GM12878 (cell line): ENCODE measurements at regions of chr6 and their contacts with region 1.

Region 1: GRCh38 chr6:25017932-25018567 is 82.3 kb upstream of the RIPOR2 start:
- DNase-seq: no peak
- ATAC-seq: peak; percentile 89
- H3K4me3 ChIP-seq: no peak overlapping the region
- H3K27ac ChIP-seq: no peak overlapping the region
- H3K4me1 ChIP-seq: peaks cover 5% of the 10 kb centered on the region
- H3K27me3 ChIP-seq: no peaks in the 10 kb centered on the region
- CTCF ChIP-seq: peak; percentile 76 to 90 (median 82)
- EP300 ChIP-seq: no peak
- POLR2A ChIP-seq: no peak
- RAD21 ChIP-seq: peak; percentile 99

Region 2: GRCh38 chr6:24848461-24848860 is 169.6 kb before region 1 on chr6:
- CTCF ChIA-PET with region 1: interaction called, 314 read pairs
- POLR2A ChIA-PET with region 1: no interaction called
- RAD21 ChIA-PET with region 1: interaction called, 3 read pairs
- SMC1A ChIA-PET with region 1: interaction called, 16 read pairs
- in situ Hi-C with region 1: no loop called
- intact Hi-C with region 1: no loop called
- DNase-seq: no peak
- ATAC-seq: no peak
- H3K4me3 ChIP-seq: no peak overlapping the region
- H3K27ac ChIP-seq: no peak overlapping the region
- H3K4me1 ChIP-seq: no peaks in the 10 kb centered on the region
- H3K27me3 ChIP-seq: no peaks in the 10 kb centered on the region
- CTCF ChIP-seq: no peak
- EP300 ChIP-seq: no peak
- POLR2A ChIP-seq: no peak
- RAD21 ChIP-seq: no peak

Region 3: GRCh38 chr6:24883618-24884017 is 134.4 kb before region 1 on chr6:
- CTCF ChIA-PET with region 1: interaction called, 12 read pairs
- POLR2A ChIA-PET with region 1: interaction called, 3 read pairs
- RAD21 ChIA-PET with region 1: interaction called, 8 read pairs
- SMC1A ChIA-PET with region 1: interaction called, 10 read pairs
- in situ Hi-C with region 1: no loop called
- intact Hi-C with region 1: no loop called
- DNase-seq: peak; percentile 84
- ATAC-seq: peak; percentile 90
- H3K4me3 ChIP-seq: no peak overlapping the region
- H3K27ac ChIP-seq: peak overlapping the region; percentile 60; the same call in 1 of the 2 replicates
- H3K4me1 ChIP-seq: peaks cover 33% of the 10 kb centered on the region
- H3K27me3 ChIP-seq: no peaks in the 10 kb centered on the region
- CTCF ChIP-seq: no peak
- EP300 ChIP-seq: peak; percentile 54 to 74; a peak in 3 of 4 replicates
- POLR2A ChIP-seq: no peak
- RAD21 ChIP-seq: no peak

Region 4: DNA sequence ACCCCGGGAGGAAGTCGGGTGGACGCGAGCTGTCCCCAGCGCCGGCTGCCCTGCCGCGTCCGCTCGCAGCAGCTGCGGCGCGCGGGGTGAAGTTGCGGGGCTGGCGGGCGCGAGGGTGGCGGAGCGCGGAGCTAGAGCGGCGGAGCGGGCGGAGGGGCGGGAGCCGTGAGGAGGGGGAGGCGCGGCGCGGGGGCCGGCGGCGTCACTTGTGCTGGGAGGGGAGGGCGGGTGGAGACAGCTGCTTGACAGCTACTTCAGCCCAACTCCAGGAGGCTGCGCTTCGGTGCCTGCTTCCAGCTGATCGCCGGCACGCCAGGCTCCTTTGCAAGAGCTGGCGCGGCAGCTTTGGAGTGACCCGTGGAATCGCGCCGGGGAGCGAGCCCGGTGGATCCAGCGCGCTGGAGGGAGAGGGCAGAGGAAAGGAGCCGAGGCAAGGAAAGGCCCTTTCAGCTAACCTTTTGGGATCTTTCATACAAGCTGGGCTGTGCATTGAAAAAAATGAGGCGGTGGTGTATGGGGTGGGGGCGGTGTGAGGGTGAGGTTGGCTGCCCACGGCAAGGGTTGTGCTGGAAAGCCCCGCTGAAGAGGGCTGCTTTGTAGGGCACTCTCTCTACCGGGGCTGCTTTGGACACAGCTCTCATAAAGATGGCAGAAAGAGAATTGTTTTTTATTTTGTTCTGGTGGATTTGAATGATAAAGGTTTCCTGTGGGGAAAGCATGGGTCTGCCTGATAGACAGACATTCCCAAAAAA is 106.9 kb before region 1 on chr6:
- CTCF ChIA-PET with region 1: interaction called, 39 read pairs
- POLR2A ChIA-PET with region 1: no interaction called
- RAD21 ChIA-PET with region 1: interaction called, 23 read pairs
- SMC1A ChIA-PET with region 1: interaction called, 21 read pairs
- in situ Hi-C with region 1: no loop called
- intact Hi-C with region 1: no loop called
- DNase-seq: no peak
- ATAC-seq: peak; percentile 47
- H3K4me3 ChIP-seq: peak overlapping the region; percentile 86
- H3K27ac ChIP-seq: peak overlapping the region; percentile 60
- H3K4me1 ChIP-seq: peaks cover 26% of the 10 kb centered on the region
- H3K27me3 ChIP-seq: no peaks in the 10 kb centered on the region
- CTCF ChIP-seq: no peak
- EP300 ChIP-seq: no peak
- POLR2A ChIP-seq: no peak; the same call in 1 of the 2 replicates
- RAD21 ChIP-seq: no peak

Region 5: DNA sequence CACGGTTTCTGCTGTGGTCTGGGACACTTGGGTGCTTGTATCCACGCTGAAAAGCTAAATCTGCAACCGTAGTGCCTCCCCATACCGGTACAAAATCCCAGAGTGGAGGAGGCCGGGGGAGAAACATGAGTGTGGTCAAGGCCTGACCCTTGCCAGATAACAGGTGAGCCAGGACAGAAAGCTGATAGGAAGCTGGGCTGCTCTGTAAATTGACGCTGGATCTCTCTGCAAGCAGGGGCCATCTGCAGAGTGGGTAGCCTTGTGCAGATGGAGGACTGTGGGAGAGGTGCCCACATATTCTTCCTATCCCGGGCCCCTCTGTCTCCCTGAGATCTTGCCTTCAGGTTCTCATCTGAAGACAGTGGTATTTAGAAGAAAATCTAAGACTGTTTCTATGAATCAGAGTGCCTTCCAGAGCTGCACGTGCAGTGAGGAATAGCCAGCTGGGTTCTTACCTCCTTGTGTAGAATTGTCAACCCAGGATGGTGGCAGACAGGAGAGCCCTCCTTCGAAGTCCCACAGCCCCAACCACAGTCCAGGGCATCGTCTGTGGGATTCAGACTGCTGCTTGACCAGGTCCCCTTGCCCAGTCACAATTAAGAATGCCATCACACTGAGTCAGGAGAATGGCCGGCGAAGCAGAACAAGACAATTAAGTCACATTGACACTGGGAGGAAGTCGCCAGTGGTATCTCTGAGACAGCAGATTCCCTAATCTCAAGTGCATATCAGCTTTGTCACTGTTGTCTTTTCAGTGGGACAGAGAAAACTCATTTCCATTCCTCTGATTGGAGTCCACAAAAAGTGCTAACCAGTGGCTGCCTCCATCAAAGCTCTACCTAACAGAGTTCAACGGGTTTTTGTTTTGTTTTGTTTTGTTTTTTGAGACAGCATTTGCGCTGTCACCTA is 17.7 kb after region 1 on chr6:
- CTCF ChIA-PET with region 1: interaction called, 16 read pairs
- POLR2A ChIA-PET with region 1: interaction called, 11 read pairs
- RAD21 ChIA-PET with region 1: interaction called, 6 read pairs
- SMC1A ChIA-PET with region 1: interaction called, 11 read pairs
- in situ Hi-C with region 1: no loop called
- intact Hi-C with region 1: no loop called
- DNase-seq: no peak
- ATAC-seq: peak; percentile 71
- H3K4me3 ChIP-seq: peak overlapping the region; percentile 52; the same call in 1 of the 2 replicates
- H3K27ac ChIP-seq: peak overlapping the region; percentile 80
- H3K4me1 ChIP-seq: peaks cover 19% of the 10 kb centered on the region
- H3K27me3 ChIP-seq: no peaks in the 10 kb centered on the region
- CTCF ChIP-seq: no peak
- EP300 ChIP-seq: no peak
- POLR2A ChIP-seq: no peak
- RAD21 ChIP-seq: no peak

Region 6: DNA sequence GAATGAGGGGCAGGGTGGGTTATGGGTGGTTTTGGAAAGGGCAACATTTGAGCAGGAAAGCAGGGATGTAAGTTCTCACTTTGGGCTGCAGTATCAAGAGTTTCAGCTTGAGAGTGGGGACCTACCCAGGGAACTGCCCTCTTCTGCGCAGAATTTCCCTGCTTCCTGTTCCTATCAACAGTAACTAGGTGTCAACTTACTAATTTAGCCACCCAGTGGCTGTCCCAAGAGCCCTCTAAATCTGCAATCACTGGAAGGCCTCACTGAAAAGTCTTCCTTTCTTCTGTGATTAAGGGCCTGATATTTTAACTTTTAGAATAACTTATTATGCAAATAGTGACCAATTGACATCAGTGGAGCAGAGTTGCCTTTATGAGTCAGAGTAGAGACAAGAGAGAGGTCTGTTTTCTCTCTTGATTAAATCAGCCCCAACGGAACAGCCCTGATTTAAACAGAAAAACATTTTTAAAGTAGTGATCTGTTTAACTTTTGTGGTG is 35.9 kb after region 1 on chr6:
- CTCF ChIA-PET with region 1: interaction called, 11 read pairs
- POLR2A ChIA-PET with region 1: no interaction called
- RAD21 ChIA-PET with region 1: no interaction called
- SMC1A ChIA-PET with region 1: interaction called, 6 read pairs
- in situ Hi-C with region 1: no loop called
- intact Hi-C with region 1: no loop called
- DNase-seq: no peak
- ATAC-seq: peak; percentile 93
- H3K4me3 ChIP-seq: no peak overlapping the region
- H3K27ac ChIP-seq: peak overlapping the region; percentile 41
- H3K4me1 ChIP-seq: peaks cover 26% of the 10 kb centered on the region
- H3K27me3 ChIP-seq: no peaks in the 10 kb centered on the region
- CTCF ChIP-seq: peak in 2 of 3 experiments; percentile 16 to 20; a peak in 2 of 6 replicates
- EP300 ChIP-seq: peak in 1 of 2 experiments; percentile 29; a peak in 1 of 4 replicates
- POLR2A ChIP-seq: no peak
- RAD21 ChIP-seq: peak; percentile 21; the same call in 1 of the 2 replicates

Region 7: GRCh38 chr6:25130518-25130917 is 112.5 kb after region 1 on chr6:
- CTCF ChIA-PET with region 1: no interaction called
- POLR2A ChIA-PET with region 1: no interaction called
- RAD21 ChIA-PET with region 1: no interaction called
- SMC1A ChIA-PET with region 1: no interaction called
- in situ Hi-C with region 1: no loop called
- intact Hi-C with region 1: no loop called
- DNase-seq: no peak
- ATAC-seq: no peak
- H3K4me3 ChIP-seq: no peak overlapping the region
- H3K27ac ChIP-seq: no peak overlapping the region
- H3K4me1 ChIP-seq: no peaks in the 10 kb centered on the region
- H3K27me3 ChIP-seq: no peaks in the 10 kb centered on the region
- CTCF ChIP-seq: no peak
- EP300 ChIP-seq: no peak
- POLR2A ChIP-seq: no peak
- RAD21 ChIP-seq: no peak

Region 8: DNA sequence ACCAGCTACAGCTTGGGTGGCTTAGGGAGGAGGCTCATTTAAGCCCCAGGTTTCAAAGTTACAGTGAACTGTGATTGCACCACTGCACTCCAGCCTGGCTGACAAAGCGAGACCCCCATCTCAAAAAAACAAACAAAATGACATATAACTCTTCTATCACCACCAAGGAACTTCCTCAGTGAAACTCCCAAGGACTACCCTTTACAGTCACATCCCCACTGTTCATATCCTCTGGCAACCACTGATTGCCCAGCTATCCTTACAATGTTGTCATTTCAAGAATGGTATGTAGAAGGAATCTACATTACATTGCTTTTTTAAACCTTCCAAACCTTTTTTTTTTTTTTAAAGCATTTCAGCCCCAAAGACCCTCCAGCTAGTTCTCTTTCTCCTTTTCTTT is 138.0 kb after region 1 on chr6:
- CTCF ChIA-PET with region 1: no interaction called
- POLR2A ChIA-PET with region 1: no interaction called
- RAD21 ChIA-PET with region 1: no interaction called
- SMC1A ChIA-PET with region 1: no interaction called
- in situ Hi-C with region 1: no loop called
- intact Hi-C with region 1: no loop called
- DNase-seq: no peak
- ATAC-seq: no peak
- H3K4me3 ChIP-seq: no peak overlapping the region
- H3K27ac ChIP-seq: no peak overlapping the region
- H3K4me1 ChIP-seq: peaks cover 3% of the 10 kb centered on the region; the same call in 1 of the 2 replicates
- H3K27me3 ChIP-seq: no peaks in the 10 kb centered on the region
- CTCF ChIP-seq: no peak
- EP300 ChIP-seq: no peak
- POLR2A ChIP-seq: no peak
- RAD21 ChIP-seq: no peak

Region 9: GRCh38 chr6:25534942-25535631 is 517.0 kb after region 1 on chr6:
- CTCF ChIA-PET with region 1: no interaction called
- POLR2A ChIA-PET with region 1: no interaction called
- RAD21 ChIA-PET with region 1: no interaction called
- SMC1A ChIA-PET with region 1: no interaction called
- in situ Hi-C with region 1: no loop called
- intact Hi-C with region 1: no loop called
- DNase-seq: no peak
- ATAC-seq: no peak
- H3K4me3 ChIP-seq: no peak overlapping the region
- H3K27ac ChIP-seq: no peak overlapping the region
- H3K4me1 ChIP-seq: no peaks in the 10 kb centered on the region
- H3K27me3 ChIP-seq: no peaks in the 10 kb centered on the region
- CTCF ChIP-seq: no peak
- EP300 ChIP-seq: no peak
- POLR2A ChIP-seq: no peak
- RAD21 ChIP-seq: no peak